Activated naive CD4-positive, alpha-beta T cell treated with anti-CD3 and anti-CD28 coated beads for 36 hours (primary cell): ENCODE measurements at regions of chr14 and their contacts with region 1.

Region 1: DNA sequence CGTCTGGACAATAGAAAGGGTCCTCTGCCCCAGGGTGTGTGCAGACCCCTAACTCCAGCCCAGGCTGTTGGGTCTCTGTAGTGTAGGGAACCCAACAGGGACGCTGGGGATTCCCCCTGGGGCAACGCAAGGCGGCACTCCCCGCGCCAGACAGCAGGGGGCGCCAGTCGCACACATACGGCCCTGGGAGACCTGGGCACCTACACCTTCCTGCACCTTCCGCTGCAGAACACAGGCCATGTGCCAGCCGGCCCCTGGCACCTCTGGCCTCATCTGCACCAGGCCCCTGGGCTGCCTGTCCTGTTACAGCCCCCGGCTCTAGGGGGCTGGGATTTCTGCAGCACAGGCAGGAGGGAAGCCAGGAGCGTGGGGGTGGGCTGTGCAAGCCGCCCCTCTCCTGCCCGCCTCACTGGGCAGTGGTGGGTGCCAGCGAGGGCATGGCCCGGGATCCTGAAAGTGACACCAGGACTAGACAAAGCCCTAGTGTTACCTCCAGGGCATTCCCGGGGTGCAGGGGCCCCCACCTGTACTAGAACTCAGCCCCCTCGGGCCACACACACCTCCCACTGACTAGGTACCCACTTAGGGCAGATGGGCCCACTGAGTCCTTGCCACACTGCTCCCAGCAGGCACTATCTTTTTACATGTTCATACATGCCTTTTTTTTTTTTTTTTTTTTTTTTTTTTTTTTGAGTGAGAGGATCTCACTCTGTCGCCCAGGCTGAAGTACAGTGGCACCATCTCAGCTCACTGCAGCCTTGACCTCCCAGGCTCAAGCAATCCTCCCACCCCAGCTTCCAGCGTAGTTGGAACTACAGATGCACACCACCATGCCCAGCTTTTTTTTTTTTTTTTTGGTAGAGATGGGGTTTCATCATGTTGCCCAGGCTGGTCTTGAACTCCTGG is 37.5 kb downstream of the CCNK start:
- DNase-seq: peak; percentile 89
- H3K4me3 Mint-ChIP-seq: no peak overlapping the region
- H3K27ac Mint-ChIP-seq: no peak overlapping the region
- H3K4me1 Mint-ChIP-seq: no peaks in the 10 kb centered on the region
- H3K27me3 Mint-ChIP-seq: no peaks in the 10 kb centered on the region

Region 2: DNA sequence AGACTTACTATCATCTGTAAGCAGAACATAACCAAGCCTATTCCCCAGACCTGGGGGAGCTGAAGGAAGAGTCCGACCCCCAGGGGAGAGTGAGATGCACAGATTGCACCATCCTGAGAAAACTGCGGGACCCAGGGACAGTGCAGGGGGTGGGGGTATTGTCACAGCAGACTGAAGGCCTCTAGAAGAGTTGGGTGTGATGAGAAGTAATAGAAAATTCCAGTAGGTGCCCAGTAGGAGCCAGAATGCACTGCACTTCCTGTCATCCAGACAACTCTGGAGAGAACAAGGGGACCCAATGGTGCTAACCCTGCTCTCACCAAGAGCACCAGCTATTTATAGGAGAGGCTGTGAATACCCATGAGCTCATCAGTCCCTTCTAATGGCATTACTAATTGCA is 436.8 kb before region 1 on chr14:
- CTCF ChIA-PET with region 1: no interaction called
- intact Hi-C with region 1: no loop called
- DNase-seq: no peak
- H3K4me3 Mint-ChIP-seq: no peak overlapping the region
- H3K27ac Mint-ChIP-seq: no peak overlapping the region
- H3K4me1 Mint-ChIP-seq: peaks cover 6% of the 10 kb centered on the region
- H3K27me3 Mint-ChIP-seq: no peaks in the 10 kb centered on the region

Region 3: DNA sequence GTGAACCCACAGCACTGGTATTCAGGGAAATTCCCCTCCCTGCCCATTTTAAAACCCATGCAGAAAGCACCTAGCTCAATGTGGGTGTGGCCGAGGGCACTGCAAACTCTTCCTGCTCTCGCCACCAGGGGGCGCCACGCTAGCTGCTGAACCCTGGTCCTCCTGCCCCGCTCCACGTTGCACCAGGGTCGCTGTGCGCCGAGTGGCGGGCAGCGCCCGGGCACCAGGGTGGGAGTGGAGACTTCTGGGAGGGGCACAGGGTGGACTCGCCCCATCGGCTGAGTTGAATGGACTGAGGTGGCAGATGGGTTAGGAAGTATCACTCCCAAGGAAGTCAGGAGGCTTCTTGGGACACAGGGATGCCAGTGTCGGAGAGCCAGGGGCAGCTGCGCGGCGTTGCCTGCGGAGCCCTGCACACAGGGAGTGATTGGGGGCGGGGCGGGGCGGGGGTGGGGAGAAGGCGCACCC is 198.6 kb before region 1 on chr14:
- CTCF ChIA-PET with region 1: no interaction called
- intact Hi-C with region 1: no loop called
- DNase-seq: peak; percentile 84
- H3K4me3 Mint-ChIP-seq: no peak overlapping the region
- H3K27ac Mint-ChIP-seq: no peak overlapping the region
- H3K4me1 Mint-ChIP-seq: no peaks in the 10 kb centered on the region
- H3K27me3 Mint-ChIP-seq: no peaks in the 10 kb centered on the region

Region 4: GRCh38 chr14:99537399-99537798 is 18.7 kb after region 1 on chr14:
- CTCF ChIA-PET with region 1: no interaction called
- intact Hi-C with region 1: no loop called
- DNase-seq: no peak
- H3K4me3 Mint-ChIP-seq: no peak overlapping the region
- H3K27ac Mint-ChIP-seq: no peak overlapping the region
- H3K4me1 Mint-ChIP-seq: peaks cover 3% of the 10 kb centered on the region
- H3K27me3 Mint-ChIP-seq: no peaks in the 10 kb centered on the region

Region 5: DNA sequence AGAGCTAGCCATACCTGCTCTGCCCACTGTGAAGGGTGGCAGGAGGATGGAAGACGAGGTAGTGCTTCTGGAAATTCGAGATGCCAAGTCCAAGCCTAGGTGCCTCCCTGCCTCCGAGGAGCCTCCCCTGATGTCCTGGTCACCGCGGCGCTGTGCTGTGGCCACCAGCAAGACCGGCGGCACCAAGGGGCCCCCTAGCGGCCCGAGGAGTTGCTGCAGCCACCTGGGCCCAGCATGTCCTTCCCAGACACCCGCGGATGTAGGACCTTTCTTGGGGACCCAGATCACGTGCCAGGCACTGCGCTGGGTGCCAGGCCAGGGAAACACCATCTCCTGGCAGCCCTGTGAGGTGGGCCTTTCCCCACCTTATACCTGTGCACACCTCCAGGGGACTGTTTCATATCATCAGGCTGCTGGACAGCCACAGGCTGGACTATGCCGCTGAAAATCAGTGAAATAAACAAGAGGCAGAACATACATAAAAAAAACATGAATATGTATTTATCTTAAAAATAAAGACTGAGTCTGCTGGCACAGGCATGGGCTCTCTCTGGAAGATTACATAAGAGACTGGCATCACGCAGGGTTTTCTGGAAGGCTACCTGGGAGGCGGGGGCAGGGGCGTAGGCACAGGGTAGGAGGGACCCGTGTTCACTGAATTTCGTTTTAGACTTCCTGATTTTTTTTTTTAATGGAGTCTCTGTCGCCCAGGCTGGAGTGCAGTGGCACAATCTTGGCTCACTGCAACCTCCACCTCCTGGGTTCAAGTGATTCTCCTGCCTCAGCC is 110.3 kb after region 1 on chr14:
- CTCF ChIA-PET with region 1: interaction called, 19 read pairs
- intact Hi-C with region 1: loop called (anchors 1 kb)
- DNase-seq: peak; percentile 75
- H3K4me3 Mint-ChIP-seq: no peak overlapping the region
- H3K27ac Mint-ChIP-seq: no peak overlapping the region
- H3K4me1 Mint-ChIP-seq: peaks cover 4% of the 10 kb centered on the region
- H3K27me3 Mint-ChIP-seq: peaks cover 14% of the 10 kb centered on the region